ENCODE measurements at regions of chr12 and their contacts with region 1.

Region 1: DNA sequence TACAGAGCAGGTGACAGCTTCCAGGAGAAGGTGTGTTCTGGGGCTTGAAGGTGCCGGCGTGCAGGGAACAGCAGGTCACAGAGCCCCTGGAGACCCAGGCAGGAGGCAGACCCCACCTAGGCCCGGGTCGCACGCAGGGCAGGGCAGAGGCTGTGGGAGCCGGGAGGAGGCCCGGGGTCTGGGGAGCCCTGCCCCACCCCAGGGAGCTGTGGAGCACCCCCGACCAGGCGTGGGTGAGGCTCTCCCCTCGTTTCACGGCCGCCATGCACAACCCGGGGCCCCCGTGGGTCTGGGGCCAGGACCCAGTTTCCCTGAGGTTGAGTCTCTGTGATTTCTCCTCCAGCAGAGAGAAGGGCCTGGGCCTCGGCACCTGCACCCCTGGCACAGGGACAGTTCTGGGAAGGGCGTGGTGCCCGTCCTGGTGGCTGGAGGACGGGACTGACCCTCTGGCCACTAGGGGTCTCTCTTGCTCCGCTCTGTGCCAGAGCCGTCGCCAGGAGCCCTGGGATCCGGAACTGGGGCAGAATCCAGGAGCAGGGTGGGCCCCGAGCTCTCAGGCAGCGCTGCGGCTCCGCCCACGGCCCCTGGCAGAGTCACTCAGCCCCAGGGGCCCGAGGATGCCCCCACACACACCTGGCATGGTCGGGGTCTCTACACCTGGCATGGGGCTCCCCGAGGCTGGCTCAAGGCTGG is 75.2 kb upstream of the FBRSL1 start:
- DNase-seq: peak; percentile 88
- ATAC-seq: peak; percentile 92

Region 2: GRCh38 chr12:132523576-132524331 is 109.0 kb after region 1 on chr12:
- intact Hi-C with region 1: loop called (anchors 1 kb)
- DNase-seq: peak; percentile 85
- ATAC-seq: peak; percentile 33

Region 3: GRCh38 chr12:132614861-132615578 is 200.2 kb after region 1 on chr12:
- intact Hi-C with region 1: loop called (anchors 1 kb)
- DNase-seq: peak; percentile 81
- ATAC-seq: peak; percentile 84